ENCODE measurements at regions of chr1 and their contacts with region 1.

Region 1: GRCh38 chr1:202501281-202501680 is 152.8 kb downstream of the PPP1R12B start:
- DNase-seq: peak in 3 of 9 donors; percentile 2 to 9 (median 5)
- ATAC-seq: no peak
- H3K4me3 ChIP-seq: no peak overlapping the region
- H3K4me3 Mint-ChIP-seq: no peak overlapping the region
- H3K27ac ChIP-seq: no peak overlapping the region
- H3K27ac Mint-ChIP-seq: no peak overlapping the region
- H3K4me1 ChIP-seq: no peaks in the 10 kb centered on the region
- H3K4me1 Mint-ChIP-seq: no peaks in the 10 kb centered on the region
- H3K27me3 ChIP-seq: no peaks in the 10 kb centered on the region
- H3K27me3 Mint-ChIP-seq: no peaks in the 10 kb centered on the region

Region 2: DNA sequence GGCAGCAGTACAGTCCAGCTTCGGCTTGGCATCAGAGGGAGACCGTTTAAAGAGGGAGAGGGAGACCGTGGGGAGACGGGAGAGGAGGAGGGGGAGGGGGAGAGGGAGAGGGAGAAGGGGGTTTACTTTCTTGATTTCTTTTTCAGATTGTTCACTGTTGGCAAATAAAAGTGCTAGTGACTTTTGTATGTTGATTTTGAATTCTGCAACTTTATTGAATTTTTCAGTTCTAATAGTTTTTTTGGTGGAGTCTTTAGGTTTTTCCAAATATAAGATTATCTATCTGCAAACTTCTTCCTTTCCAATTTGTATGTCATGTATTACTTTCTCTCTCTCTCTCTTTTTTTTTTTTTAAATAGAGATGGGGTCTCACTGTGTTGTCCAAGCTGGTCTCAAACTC is 48.8 kb before region 1 on chr1:
- CTCF ChIA-PET with region 1: no interaction called
- POLR2A ChIA-PET with region 1: no interaction called
- intact Hi-C with region 1: no loop called
- DNase-seq: no peak
- ATAC-seq: no peak
- H3K4me3 ChIP-seq: no peak overlapping the region
- H3K4me3 Mint-ChIP-seq: no peak overlapping the region
- H3K27ac ChIP-seq: no peak overlapping the region
- H3K27ac Mint-ChIP-seq: no peak overlapping the region
- H3K4me1 ChIP-seq: no peaks in the 10 kb centered on the region
- H3K4me1 Mint-ChIP-seq: peaks cover 0 to 4% (median 0%) of the 10 kb centered on the region in 7 donors
- H3K27me3 ChIP-seq: no peaks in the 10 kb centered on the region
- H3K27me3 Mint-ChIP-seq: no peaks in the 10 kb centered on the region

Region 3: DNA sequence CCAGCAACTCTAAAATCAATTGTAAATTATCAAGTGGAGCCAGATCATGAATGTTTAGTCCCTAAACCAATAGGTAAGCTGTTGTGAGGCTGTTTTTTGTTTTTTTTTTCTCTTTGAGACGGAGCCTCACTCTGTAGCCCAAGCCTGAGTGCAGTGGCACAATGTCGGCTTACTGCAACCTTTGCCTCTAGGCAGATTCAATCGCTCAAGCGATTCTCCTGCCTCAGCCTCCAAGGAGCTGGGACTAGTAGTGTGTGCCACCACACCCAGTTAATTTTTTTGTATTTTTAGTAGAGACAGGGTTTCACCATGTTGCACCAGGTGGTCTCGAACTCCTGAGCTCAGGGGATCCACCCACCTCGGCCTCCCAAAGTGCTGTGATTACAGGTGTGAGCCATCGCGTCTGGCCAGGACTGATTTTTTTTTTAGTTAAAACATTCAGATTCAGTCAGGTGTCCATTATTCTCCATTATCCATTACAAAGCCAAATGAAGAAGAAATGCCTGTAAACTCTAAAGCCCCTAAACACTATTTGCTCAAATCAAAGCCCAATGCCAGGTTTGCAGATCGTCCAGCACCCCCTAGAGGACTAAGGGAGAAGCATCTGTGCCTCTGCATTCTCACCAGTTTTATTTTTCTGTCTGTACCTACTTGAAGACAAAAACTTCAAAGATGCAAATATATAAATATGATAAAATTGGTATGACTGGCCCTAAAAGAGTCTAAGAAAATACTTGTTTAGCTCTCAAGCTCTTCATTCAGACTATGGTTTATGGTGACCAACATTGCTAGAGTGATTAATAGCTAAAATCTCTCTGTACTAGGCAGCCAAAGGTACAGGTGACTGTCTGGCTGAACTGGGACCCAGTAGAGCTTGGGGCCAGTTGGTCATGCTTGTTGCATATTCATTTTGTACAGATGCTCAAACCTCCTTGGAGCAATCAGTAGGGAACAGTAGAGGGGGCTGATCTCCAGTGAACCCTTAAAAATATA is 70.4 kb after region 1 on chr1:
- CTCF ChIA-PET with region 1: no interaction called
- POLR2A ChIA-PET with region 1: no interaction called
- intact Hi-C with region 1: loop called in 1 of 2 experiments (anchors 5 kb)
- DNase-seq: peak in 5 of 9 donors; percentile 3 to 12 (median 5)
- ATAC-seq: no peak
- H3K4me3 ChIP-seq: no peak overlapping the region
- H3K4me3 Mint-ChIP-seq: no peak overlapping the region
- H3K27ac ChIP-seq: no peak overlapping the region
- H3K27ac Mint-ChIP-seq: no peak overlapping the region
- H3K4me1 ChIP-seq: no peaks in the 10 kb centered on the region
- H3K4me1 Mint-ChIP-seq: peaks cover 0 to 6% (median 0%) of the 10 kb centered on the region in 7 donors
- H3K27me3 ChIP-seq: no peaks in the 10 kb centered on the region
- H3K27me3 Mint-ChIP-seq: no peaks in the 10 kb centered on the region

Region 4: GRCh38 chr1:202625416-202626360 is 124.4 kb after region 1 on chr1:
- CTCF ChIA-PET with region 1: no interaction called
- POLR2A ChIA-PET with region 1: no interaction called
- intact Hi-C with region 1: loop called in 1 of 2 experiments (anchors 2 kb)
- DNase-seq: peak; percentile 21 to 61 (median 47)
- ATAC-seq: peak; percentile 75
- H3K4me3 ChIP-seq: no peak overlapping the region
- H3K4me3 Mint-ChIP-seq: peak overlapping the region in 1 of 10 donors; percentile 31
- H3K27ac ChIP-seq: no peak overlapping the region
- H3K27ac Mint-ChIP-seq: no peak overlapping the region
- H3K4me1 ChIP-seq: peaks cover 30 to 34% of the 10 kb centered on the region in 2 donors
- H3K4me1 Mint-ChIP-seq: peaks cover 18 to 39% (median 36%) of the 10 kb centered on the region in 7 donors
- H3K27me3 ChIP-seq: no peaks in the 10 kb centered on the region
- H3K27me3 Mint-ChIP-seq: peaks cover 9 to 21% (median 14%) of the 10 kb centered on the region in 5 donors

Region 5: DNA sequence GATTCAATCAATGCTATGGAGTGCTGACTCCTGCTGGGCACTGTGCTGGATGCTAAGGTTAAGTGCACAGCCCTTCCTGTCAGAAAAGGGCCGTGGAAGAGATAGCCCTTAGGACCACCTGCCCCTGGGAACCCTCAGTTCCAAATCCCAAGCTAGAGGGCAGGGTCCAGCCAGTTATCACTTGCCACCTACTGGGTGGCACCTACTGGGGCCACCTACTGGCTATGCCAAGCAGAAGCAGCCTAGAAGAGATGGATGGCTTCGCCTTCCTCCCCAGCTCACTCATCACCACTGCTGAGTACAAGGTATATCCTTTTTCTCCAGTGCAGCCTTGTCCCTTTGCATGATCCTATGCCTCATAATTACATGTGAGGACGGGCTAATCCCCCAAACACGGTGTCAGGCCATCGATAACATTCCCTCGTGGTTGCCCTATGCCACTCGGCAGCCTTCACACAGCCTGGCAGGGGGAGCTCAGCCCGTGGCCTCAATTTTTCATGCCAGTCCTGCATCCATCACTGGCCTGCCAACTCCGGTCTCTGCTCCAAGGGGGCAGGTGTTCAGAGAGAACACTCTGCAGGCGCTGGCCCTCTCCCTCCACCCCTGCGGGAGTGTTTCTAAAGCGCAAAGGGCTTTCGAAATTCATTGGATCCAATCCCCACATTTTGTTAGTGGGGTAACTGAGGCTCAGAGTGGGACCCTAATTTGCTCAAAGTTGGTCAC is 160.0 kb after region 1 on chr1:
- CTCF ChIA-PET with region 1: no interaction called
- POLR2A ChIA-PET with region 1: no interaction called
- intact Hi-C with region 1: loop called in 1 of 2 experiments (anchors 2 kb)
- DNase-seq: peak in 1 of 9 donors; percentile 13
- ATAC-seq: no peak
- H3K4me3 ChIP-seq: no peak overlapping the region
- H3K4me3 Mint-ChIP-seq: no peak overlapping the region
- H3K27ac ChIP-seq: no peak overlapping the region
- H3K27ac Mint-ChIP-seq: no peak overlapping the region
- H3K4me1 ChIP-seq: no peaks in the 10 kb centered on the region
- H3K4me1 Mint-ChIP-seq: peaks cover 0 to 3% (median 0%) of the 10 kb centered on the region in 7 donors
- H3K27me3 ChIP-seq: no peaks in the 10 kb centered on the region
- H3K27me3 Mint-ChIP-seq: peaks cover 22 to 47% (median 40%) of the 10 kb centered on the region in 5 donors

Region 6: DNA sequence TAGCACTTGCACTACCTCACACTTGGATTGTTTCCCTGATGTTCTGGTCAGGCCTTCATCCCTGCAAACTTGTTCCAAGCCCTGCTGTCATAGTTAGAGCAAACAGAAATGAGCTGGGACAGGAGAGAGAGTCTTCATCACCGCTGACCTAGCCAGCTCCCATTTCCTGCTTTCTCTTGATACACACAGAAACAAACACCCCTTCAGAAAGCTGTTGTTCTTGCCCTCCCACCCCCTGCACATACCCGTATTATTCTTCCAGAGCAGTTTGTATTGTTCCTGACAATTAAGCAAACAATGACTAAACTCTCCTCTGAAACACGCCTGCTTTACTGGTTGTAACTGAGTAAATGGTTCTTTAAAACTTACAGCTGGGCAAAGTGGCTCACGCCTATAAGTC is 211.8 kb after region 1 on chr1:
- CTCF ChIA-PET with region 1: interaction called, 4 read pairs
- POLR2A ChIA-PET with region 1: no interaction called
- intact Hi-C with region 1: loop called in 1 of 2 experiments (anchors 2 kb)
- DNase-seq: no peak
- ATAC-seq: no peak
- H3K4me3 ChIP-seq: no peak overlapping the region
- H3K4me3 Mint-ChIP-seq: no peak overlapping the region
- H3K27ac ChIP-seq: no peak overlapping the region
- H3K27ac Mint-ChIP-seq: no peak overlapping the region
- H3K4me1 ChIP-seq: no peaks in the 10 kb centered on the region
- H3K4me1 Mint-ChIP-seq: peaks cover 0 to 12% (median 5%) of the 10 kb centered on the region in 7 donors
- H3K27me3 ChIP-seq: peaks cover 0 to 3% of the 10 kb centered on the region in 2 donors
- H3K27me3 Mint-ChIP-seq: peaks cover 36 to 77% (median 42%) of the 10 kb centered on the region in 5 donors

Region 7: DNA sequence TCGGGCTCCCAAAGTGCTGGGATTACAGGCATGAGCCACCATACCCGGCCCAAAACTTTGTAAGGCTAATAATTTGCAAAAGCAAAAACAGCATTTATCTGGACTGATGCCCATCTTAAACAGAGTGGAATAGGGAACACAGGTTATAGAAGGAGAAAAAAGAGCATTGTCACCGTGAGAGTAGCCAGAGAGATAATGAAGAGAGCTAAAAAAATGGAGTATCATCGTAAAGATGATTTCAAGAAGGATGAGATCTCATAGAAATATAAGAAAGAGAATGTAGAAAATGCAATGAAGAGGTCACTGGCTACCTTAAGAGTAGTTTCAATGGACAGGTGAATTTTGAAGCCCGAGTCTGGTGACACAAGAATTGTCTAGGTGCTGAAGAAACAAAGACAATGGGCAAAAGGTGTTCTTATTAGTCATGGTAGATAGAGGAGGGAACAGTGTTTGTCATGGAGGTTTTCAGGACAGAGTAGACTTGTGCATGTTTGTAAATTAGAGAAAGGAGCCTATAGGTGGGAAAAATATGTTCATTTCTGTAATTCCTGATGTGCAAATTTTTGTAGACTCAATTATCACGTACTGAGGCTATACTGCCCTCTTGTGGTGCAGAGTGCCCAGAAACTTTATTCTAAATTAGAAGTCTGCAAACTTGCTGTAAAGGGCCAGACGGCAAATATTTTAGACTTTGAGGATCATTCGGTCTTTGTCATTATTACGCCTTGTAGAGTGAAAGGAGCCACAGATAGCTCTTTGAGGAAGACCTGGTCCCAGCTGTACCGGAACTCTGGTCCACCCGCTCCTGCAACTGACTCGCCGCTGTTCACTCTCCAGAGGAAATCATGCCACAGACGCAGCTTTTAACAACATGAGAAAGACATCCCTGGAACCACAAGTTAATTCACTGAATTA is 497.8 kb after region 1 on chr1:
- CTCF ChIA-PET with region 1: no interaction called
- POLR2A ChIA-PET with region 1: no interaction called
- intact Hi-C with region 1: loop called in 1 of 2 experiments (anchors 5 kb)
- DNase-seq: peak; percentile 18 to 74 (median 63)
- ATAC-seq: peak; percentile 89
- H3K4me3 ChIP-seq: no peak overlapping the region
- H3K4me3 Mint-ChIP-seq: peak overlapping the region in 7 of 10 donors; percentile 44 to 75 (median 56)
- H3K27ac ChIP-seq: no peak overlapping the region
- H3K27ac Mint-ChIP-seq: peak overlapping the region in 4 of 9 donors; percentile 23 to 70 (median 52)
- H3K4me1 ChIP-seq: no peaks in the 10 kb centered on the region
- H3K4me1 Mint-ChIP-seq: peaks cover 3 to 10% (median 6%) of the 10 kb centered on the region in 7 donors
- H3K27me3 ChIP-seq: no peaks in the 10 kb centered on the region
- H3K27me3 Mint-ChIP-seq: peaks cover 24 to 40% (median 28%) of the 10 kb centered on the region in 5 donors